Psoas muscle (tissue), 8 donors: ENCODE measurements at regions of chr9 and their contacts with region 1.

Region 1: GRCh38 chr9:38362852-38363593 is 29.5 kb upstream of the ALDH1B1 start:
- DNase-seq: peak in 1 of 2 donors; percentile 28
- ATAC-seq: peak; percentile 75 to 86 (median 79)
- H3K4me3 ChIP-seq: no peak overlapping the region
- H3K27ac ChIP-seq: no peak overlapping the region
- H3K4me1 ChIP-seq: no peaks in the 10 kb centered on the region
- H3K27me3 ChIP-seq: no peaks in the 10 kb centered on the region
- CTCF ChIP-seq: peak; percentile 70

Region 2: DNA sequence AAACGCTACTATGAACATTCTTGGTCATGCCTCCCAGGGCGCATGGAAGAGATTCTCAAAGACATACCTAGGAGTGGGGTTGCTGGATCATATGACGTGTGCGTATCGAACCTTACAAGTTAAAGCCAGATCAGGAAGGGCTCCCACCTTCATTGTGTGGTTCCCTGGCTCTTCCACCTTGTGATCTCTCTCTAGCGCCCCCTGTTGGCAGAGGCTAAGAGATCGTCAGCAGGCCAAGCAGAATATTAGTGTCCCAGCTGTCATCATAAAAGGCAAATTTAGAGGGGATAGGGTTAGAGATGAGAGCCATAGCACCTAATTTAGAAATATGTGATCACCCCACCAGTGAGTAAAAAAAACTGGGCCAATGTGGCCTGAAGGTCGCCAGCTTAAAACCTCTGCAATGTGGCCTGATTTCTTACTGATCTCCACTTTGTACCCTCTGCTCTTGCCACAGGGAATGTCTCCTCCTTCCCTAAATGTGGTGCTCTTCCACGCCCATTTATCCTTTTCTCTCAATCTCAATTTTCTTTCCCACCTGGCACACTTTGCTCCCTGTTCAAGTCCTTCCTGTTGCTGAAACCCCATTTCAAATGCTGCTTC is 202.3 kb before region 1 on chr9:
- intact Hi-C with region 1: loop called in 1 of 2 experiments (anchors 5 kb)
- DNase-seq: peak; percentile 47 to 71
- ATAC-seq: peak; percentile 73 to 82 (median 80)
- H3K4me3 ChIP-seq: no peak overlapping the region
- H3K27ac ChIP-seq: no peak overlapping the region
- H3K4me1 ChIP-seq: no peaks in the 10 kb centered on the region
- H3K27me3 ChIP-seq: no peaks in the 10 kb centered on the region
- CTCF ChIP-seq: peak; percentile 86